ENCODE measurements at regions of chr1 and their contacts with region 1.

Region 1: DNA sequence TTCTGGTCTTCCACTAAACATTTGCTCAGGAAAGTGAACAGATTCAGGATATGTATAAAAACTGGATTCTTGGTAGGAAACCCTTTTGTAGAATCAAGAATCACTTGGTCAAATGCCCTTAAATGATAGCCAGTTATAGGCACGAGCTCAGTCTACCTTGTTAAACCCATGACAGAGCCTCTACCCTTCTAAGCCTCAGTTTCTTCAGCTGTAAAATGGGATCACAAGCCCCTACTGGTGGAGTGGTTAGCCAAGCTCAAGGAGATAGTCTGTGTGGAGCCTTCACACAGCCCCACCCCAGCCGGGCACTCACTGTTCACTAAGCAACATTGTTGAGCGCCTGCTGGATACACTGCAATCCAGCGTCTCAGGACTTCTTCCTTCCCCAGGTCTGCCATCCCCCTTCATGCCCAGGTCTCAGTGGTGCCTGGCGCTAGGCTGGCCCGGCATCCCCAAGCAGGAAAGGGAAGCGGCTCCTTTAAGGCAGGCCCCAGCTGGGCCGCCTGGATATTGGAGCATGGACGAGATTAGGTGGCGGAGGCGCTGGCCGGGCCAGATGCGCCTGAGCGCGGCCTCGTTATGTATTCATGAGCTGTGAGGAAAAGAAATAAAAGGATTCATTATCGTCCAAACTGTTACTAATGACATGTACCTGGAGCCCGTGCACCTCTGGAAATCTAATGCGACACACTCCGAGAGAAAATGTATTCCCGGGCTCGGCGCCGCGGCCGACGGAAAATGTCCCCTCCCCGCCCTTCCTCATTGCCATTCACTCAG is 75.6 kb downstream of the TAS1R2 start:
- DNase-seq: no peak
- ATAC-seq: no peak
- H3K4me3 ChIP-seq: no peak overlapping the region
- H3K27ac ChIP-seq: no peak overlapping the region
- H3K4me1 ChIP-seq: no peaks in the 10 kb centered on the region
- H3K27me3 ChIP-seq: no peaks in the 10 kb centered on the region; the same call in 1 of the 2 replicates
- CTCF ChIP-seq: no peak

Region 2: DNA sequence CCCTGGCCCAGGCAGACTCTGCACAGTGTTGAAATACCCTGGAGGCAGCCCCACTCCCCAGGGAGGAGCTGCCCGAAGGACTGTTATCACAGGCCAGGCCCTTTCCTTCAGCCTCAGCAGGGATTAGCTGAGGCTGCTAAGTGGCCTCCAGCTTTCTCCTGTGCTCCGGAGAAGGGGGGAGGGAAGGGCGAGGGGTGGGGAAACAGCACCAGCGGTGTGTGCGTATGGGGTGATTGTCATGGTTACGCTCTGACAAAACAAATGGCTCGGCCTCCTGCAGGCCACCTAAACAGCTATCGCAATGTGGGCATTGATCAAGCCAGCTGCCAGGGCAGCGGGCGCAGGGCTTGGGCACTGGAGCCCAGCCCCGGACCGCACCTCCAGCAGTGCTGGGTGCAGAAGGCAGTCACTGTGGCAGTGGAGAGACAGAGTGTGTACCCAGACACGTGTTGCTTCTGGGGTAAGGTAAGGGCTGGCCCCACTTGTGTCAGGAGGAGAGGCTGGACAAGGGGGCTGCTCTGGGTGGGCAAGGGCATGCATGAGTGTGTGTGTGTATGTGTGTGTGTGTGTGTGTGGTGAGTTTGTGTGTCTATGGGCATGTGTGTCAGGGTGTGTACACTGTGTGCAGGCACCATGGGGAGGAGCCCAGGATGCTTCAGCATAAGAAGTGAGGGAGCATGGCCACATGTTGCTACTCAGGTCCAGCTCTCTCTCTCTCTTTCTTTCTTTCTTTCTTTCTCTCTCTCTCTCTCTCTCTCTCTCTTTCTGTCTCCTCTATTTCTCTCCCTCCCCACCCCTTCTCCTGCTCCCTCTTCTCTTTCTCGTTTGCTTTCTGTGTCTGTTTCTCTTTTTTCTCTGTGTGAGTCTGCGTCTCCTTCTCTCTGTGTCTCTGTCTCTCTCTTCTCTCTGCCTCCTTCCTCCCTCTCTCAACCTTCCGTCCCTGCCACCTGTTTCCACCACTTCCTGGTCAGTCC is 1507.0 kb after region 1 on chr1 and contains the start of gene VWA5B1:
- CTCF ChIA-PET with region 1: no interaction called
- POLR2A ChIA-PET with region 1: interaction called, 10 read pairs
- in situ Hi-C with region 1: no loop called
- intact Hi-C with region 1: no loop called
- DNase-seq: no peak
- ATAC-seq: 0 out of 2 replicates have a peak, but pooled peaks have one; percentile 17
- H3K4me3 ChIP-seq: no peak within 1 kb of the TSS
- H3K27ac ChIP-seq: no peak within 1 kb of the TSS
- H3K4me1 ChIP-seq: no peaks in the 10 kb centered on the region
- H3K27me3 ChIP-seq: peaks cover 9% of the 10 kb centered on the region; the same call in 1 of the 2 replicates
- CTCF ChIP-seq: no peak
- total RNA-seq, gene VWA5B1: not detected

Measured in Panc1 (cell line).